AG04450 (cell line): ENCODE measurements at regions of chr3 and their contacts with region 1.

Region 1: GRCh38 chr3:124063197-124063909 is 71.4 kb upstream of the ROPN1 start:
- DNase-seq: peak; percentile 15
- H3K4me3 ChIP-seq: no peak overlapping the region
- H3K27ac ChIP-seq: no peak overlapping the region
- H3K27me3 ChIP-seq: peaks cover 10% of the 10 kb centered on the region
- CTCF ChIP-seq: no peak

Region 2: GRCh38 chr3:124078953-124079911 is 15.9 kb after region 1 on chr3:
- CTCF ChIA-PET with region 1: interaction called, 12 read pairs
- POLR2A ChIA-PET with region 1: no interaction called
- DNase-seq: no peak
- H3K4me3 ChIP-seq: no peak overlapping the region
- H3K27ac ChIP-seq: no peak overlapping the region
- H3K27me3 ChIP-seq: peaks cover 7% of the 10 kb centered on the region
- CTCF ChIP-seq: peak; percentile 81